ENCODE measurements at regions of chr6 and their contacts with region 1.

Region 1: DNA sequence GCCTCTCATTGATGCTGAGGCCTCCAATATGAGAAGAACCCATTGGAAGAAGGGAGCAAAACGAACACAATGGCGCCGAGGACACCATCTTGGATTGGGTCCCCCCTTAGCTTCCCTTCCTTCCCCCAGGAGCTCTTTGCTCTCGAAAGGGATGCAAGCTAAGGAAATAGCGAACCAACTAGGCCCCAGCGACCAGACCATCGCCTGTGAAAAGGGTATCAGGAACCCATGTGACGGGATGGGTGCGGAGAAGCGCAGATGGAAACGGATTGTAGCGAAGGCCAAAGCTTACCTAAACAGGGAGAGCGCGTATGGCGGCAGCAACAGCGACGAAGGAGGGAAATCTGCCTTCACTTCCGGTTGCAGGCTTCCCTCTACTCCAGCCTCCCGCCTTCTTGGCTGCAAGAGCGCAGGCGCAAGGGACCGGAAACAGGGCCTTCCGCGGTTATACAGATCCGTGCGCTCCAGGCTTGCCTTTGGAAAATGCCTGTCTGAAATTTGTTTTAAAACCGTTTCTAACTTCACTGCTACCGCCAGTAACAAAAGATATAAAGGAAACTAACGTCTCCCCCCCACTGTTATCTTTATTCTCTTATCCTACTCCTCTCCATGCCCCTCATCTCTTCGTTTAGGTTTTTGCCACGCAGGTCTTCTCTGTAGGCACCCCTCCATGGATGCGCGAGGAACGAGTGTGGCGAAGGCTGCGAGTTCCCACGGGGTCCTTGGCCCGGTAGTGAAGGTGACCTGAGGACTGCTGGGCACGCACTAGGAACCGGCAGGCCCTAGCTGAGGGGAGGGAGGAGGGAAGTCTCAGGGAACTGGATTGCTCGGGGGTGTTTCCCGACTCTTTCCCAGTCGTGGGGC is at the start of gene DDX39B:
- DNase-seq: peak; percentile 89 to 90
- H3K4me3 ChIP-seq: peak within 1 kb of the TSS; percentile 75
- H3K27ac ChIP-seq: peak within 1 kb of the TSS; percentile 95
- H3K4me1 ChIP-seq: peaks cover 29% of the 10 kb centered on the region
- H3K27me3 ChIP-seq: no peaks in the 10 kb centered on the region
- CTCF ChIP-seq: no peak
- total RNA-seq, gene DDX39B: 383 and 436 TPM in 2 replicates

Region 2: GRCh38 chr6:31806465-31807272 is 264.8 kb after region 1 on chr6 and contains the start of gene LSM2:
- CTCF ChIA-PET with region 1: no interaction called
- POLR2A ChIA-PET with region 1: interaction called, 10 read pairs
- intact Hi-C with region 1: no loop called
- DNase-seq: peak; percentile 82 to 97
- H3K4me3 ChIP-seq: peak within 1 kb of the TSS; percentile 93
- H3K27ac ChIP-seq: peak within 1 kb of the TSS; percentile 56
- H3K4me1 ChIP-seq: peaks cover 8% of the 10 kb centered on the region; the same call in 1 of the 2 replicates
- H3K27me3 ChIP-seq: no peaks in the 10 kb centered on the region
- CTCF ChIP-seq: peak; percentile 54
- total RNA-seq, gene LSM2: 67.5 and 74.3 TPM in 2 replicates

Region 3: GRCh38 chr6:32195652-32195901 is 653.7 kb after region 1 on chr6:
- CTCF ChIA-PET with region 1: no interaction called
- POLR2A ChIA-PET with region 1: no interaction called
- intact Hi-C with region 1: loop called (anchors 10 kb)
- DNase-seq: peak; percentile 98 to 100
- H3K4me3 ChIP-seq: peak overlapping the region; percentile 96; the same call in 1 of the 2 replicates
- H3K27ac ChIP-seq: no peak overlapping the region
- H3K4me1 ChIP-seq: peaks cover 18% of the 10 kb centered on the region
- H3K27me3 ChIP-seq: peaks cover 4% of the 10 kb centered on the region
- CTCF ChIP-seq: no peak; the same call in none of the 2 replicates